ENCODE measurements at regions of chr7 and their contacts with region 1.

Region 1: DNA sequence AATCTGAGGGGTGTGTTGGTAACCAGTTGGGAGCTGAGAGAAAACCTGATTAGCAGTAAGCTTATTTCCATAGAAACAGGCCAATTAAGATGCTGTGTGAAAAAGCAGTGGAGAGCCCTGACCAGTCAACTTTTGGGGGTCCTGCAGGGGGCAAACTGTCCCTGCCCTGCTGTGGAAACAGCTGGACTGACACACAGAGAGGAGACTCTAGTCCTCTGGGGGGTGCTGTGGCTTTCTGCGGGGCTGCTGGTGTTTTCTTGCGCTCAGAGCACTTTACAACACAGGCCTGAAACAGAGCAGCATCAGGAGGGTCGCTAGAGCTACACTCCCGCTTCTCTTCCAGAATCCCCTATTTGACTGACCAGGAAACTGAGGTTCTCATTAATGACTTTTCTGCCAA is 546.9 kb upstream of the GALNT17 start:
- DNase-seq: peak in 1 of 2 experiments; percentile 69
- H3K4me3 ChIP-seq: no peak overlapping the region
- H3K27ac ChIP-seq: no peak overlapping the region
- H3K4me1 ChIP-seq: peaks cover 11 to 34% (median 19%) of the 10 kb centered on the region in 4 experiments
- H3K27me3 ChIP-seq: 0 out of 7 replicates have a peak, but pooled peaks cover 0 to 1% (median 0%) of the 10 kb centered on the region in 4 experiments
- CTCF ChIP-seq: peak; percentile 72 to 97 (median 79)
- EP300 ChIP-seq: no peak
- POLR2A ChIP-seq: no peak
- RAD21 ChIP-seq: peak; percentile 80 to 87

Region 2: DNA sequence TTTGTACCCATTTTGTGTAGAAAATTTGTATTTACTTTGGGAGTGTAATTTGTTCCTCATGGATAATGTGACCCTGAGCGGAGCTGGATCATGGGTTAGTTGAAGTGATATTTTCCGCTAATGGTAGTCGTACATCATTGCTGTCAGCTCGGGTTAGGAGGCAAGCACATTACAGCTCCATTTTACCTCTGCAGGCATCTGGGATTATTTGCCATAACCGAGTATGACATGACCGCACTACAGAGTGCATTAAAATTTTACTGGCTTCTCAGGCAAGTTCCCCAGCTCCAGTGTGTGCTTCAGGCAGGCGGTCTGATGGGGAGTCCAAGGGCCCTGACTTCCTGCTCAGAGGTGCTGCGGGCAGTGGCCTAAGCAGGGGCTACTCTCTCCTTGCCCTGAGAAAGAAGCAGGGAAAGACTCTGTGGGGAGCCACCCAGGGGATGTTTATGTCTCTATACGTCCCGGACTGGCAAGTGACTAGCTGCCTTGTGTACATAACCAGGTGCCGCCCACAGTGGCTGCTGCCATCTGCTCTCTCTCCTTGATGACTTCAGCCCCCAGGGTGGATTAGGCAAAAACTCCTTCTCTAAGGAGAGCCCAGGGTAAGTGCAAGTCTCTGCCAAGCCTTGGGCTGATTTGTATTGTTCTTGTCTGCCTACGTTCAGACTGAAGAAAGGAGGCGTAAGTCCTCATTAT is 138.5 kb before region 1 on chr7:
- CTCF ChIA-PET with region 1: no interaction called
- POLR2A ChIA-PET with region 1: no interaction called
- DNase-seq: no peak
- H3K4me3 ChIP-seq: no peak overlapping the region
- H3K27ac ChIP-seq: no peak overlapping the region
- H3K4me1 ChIP-seq: peaks cover 0 to 5% (median 2%) of the 10 kb centered on the region in 4 experiments; a peak in 4 of 7 replicates
- H3K27me3 ChIP-seq: peaks cover 0 to 2% (median 0%) of the 10 kb centered on the region in 4 experiments; a peak in 2 of 7 replicates
- CTCF ChIP-seq: no peak
- EP300 ChIP-seq: no peak
- POLR2A ChIP-seq: no peak
- RAD21 ChIP-seq: no peak

Region 3: DNA sequence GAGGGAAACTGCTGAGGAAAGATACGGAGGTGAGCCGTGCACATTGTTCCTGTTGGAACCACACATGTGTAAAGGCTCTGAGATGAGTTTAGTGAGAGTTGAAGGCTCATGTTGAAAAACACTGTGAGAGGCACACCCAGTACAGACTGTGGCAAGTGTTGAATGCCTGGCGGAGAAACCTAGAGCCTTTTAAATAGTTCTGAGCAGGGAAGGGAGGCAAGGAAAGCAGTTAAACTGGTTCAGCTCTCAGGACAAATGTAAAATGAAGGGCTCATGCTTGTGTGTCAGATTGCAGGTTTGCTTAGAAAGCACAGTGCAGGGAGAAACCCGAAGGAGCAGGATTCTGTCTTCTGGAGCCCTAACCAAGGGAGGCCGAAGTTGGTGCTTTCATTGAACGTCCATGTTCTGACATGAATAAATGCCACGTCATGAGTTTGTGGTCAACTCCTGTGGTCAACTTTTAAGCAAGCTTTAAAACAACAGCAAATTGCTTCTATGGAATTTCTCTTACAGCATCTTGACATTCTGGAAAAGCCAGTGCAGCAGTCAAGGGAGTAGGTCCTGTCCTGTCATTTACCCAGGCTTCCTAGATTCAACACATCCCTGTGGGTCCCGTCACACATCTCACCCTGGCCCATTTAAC is 104.0 kb before region 1 on chr7:
- CTCF ChIA-PET with region 1: no interaction called
- POLR2A ChIA-PET with region 1: no interaction called
- DNase-seq: no peak
- H3K4me3 ChIP-seq: no peak overlapping the region
- H3K27ac ChIP-seq: no peak overlapping the region
- H3K4me1 ChIP-seq: no peaks in the 10 kb centered on the region
- H3K27me3 ChIP-seq: no peaks in the 10 kb centered on the region
- CTCF ChIP-seq: no peak
- EP300 ChIP-seq: no peak
- POLR2A ChIP-seq: no peak
- RAD21 ChIP-seq: no peak

Region 4: DNA sequence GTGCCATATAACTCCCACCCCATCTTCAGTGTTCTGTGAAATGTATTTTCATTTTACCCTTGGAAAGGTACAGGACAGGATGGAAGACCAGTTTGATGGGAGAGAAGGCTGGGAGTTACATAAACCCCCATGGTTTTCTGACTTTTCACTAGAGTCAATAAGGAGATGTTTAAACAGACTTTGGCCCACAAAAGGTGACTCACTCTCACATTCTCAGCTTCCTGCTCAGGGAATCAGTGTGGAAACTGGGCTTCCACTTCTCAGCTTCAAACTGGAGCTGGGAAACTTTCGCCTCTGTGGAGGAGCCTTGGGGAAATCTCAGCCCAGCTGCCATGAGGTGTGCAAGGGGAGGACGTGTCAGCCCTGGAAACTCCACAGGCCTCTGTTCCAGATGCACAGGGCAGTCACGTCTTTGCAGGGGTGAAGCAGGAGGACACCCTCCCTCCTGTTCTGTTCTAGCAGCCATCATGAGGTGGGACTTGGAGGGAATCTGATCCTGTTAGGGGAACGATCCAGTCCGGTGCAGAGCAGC is 13.6 kb before region 1 on chr7:
- CTCF ChIA-PET with region 1: interaction called, 13 read pairs
- POLR2A ChIA-PET with region 1: interaction called, 3 read pairs
- DNase-seq: no peak
- H3K4me3 ChIP-seq: no peak overlapping the region
- H3K27ac ChIP-seq: no peak overlapping the region
- H3K4me1 ChIP-seq: peaks cover 0 to 3% (median 0%) of the 10 kb centered on the region in 4 experiments; a peak in 1 of 7 replicates
- H3K27me3 ChIP-seq: no peaks in the 10 kb centered on the region
- CTCF ChIP-seq: no peak
- EP300 ChIP-seq: no peak
- POLR2A ChIP-seq: no peak
- RAD21 ChIP-seq: no peak

Region 5: DNA sequence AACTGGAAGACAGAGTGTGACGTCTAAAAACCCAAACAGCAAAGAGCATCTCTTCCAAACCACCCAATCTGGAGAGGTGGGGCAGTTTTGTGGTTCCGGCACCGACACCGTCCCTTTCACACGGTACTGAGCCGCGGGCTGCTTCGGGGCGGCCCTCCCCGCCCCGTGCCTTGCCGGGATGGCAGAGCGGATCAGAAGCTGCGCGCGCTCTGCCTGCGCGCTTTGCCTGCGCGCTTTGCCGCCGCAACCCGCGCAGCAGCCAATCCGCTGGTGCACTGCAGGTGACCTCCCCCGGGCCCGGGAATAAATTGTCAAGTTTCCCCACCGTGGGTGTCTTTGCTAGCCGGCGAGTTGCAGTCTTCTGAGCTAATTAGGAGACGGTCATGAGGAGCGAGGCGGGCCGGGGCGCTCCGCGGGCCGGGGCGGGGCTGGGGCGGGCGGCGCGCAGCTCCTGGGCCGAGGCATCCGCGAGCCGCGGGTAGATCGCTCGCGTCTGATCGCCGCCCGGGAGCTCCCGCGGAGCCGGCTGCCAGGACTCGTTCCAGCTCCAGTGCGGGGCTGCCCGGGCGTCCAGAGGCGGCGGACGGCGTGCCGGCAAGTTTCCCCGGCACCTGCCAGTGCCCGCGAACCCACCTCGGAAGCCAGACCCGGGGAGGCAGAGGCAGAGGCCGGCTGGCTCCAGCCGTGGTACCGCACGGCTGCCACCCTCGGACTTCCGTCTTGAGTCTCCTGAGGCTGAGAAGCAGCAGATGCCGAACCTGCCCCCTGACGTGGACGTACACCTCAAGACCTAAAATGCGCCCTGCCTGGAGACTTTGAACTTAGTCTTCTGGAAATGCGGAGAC is 10.9 kb after region 1 on chr7:
- CTCF ChIA-PET with region 1: interaction called, 12 read pairs
- POLR2A ChIA-PET with region 1: interaction called, 3 read pairs
- DNase-seq: peak in 1 of 2 experiments; percentile 81
- H3K4me3 ChIP-seq: peak overlapping the region; percentile 59 to 74 (median 64)
- H3K27ac ChIP-seq: no peak overlapping the region
- H3K4me1 ChIP-seq: peaks cover 3 to 9% (median 5%) of the 10 kb centered on the region in 4 experiments; a peak in 6 of 7 replicates
- H3K27me3 ChIP-seq: peaks cover 11 to 51% (median 41%) of the 10 kb centered on the region in 4 experiments
- CTCF ChIP-seq: no peak
- EP300 ChIP-seq: no peak
- POLR2A ChIP-seq: no peak
- RAD21 ChIP-seq: no peak

Region 6: DNA sequence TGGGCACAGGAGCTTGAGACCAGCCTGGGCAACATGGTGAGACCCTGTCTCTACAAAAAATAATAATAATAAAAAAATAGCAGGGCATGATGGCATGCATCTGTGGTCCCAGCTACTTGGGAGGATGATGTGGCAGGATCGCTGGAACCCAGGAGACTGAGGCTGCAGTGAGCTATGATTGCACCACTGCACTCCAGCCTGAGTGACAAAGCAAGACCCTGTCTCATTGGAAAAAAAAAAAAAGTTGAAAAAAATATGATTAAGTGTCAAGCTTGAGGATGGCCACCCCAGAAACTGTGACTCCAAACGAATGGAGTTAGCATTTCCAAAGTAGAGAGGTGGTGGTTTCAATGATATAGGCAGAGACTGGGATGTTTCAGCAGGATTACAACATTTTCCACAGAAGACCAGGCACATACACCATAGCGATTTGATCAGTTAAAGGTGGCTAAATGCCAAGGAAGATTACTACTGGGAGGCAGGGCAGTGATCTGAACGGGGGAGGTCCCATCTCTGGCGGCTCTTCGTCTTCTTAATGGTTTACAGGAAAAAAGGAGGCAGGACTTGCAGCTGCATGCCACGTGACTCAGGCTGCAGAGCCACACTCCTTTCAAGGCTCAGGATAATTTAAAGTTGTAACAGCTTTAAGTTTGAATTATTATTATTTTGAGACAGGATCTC is 296.2 kb after region 1 on chr7:
- CTCF ChIA-PET with region 1: no interaction called
- POLR2A ChIA-PET with region 1: no interaction called
- DNase-seq: no peak
- H3K4me3 ChIP-seq: no peak overlapping the region
- H3K27ac ChIP-seq: no peak overlapping the region
- H3K4me1 ChIP-seq: peaks cover 3 to 13% (median 7%) of the 10 kb centered on the region in 4 experiments; a peak in 5 of 7 replicates
- H3K27me3 ChIP-seq: no peaks in the 10 kb centered on the region
- CTCF ChIP-seq: no peak
- EP300 ChIP-seq: no peak
- POLR2A ChIP-seq: no peak
- RAD21 ChIP-seq: no peak

Measured in H1 (cell line).